Sigmoid colon (tissue), 7 donors: ENCODE measurements at regions of chr6 and their contacts with region 1.

Region 1: GRCh38 chr6:12011276-12012076 is 636 bp upstream of the HIVEP1 start:
- DNase-seq: peak; percentile 99
- H3K4me3 ChIP-seq: peak overlapping the region; percentile 47 to 93 (median 81)
- H3K27ac ChIP-seq: peak overlapping the region; percentile 93 to 99 (median 98)
- H3K4me1 ChIP-seq: peaks cover 0 to 35% (median 31%) of the 10 kb centered on the region in 4 donors
- H3K27me3 ChIP-seq: no peaks in the 10 kb centered on the region
- CTCF ChIP-seq: no peak
- EP300 ChIP-seq: peak in 3 of 4 donors; percentile 14 to 56 (median 52)
- POLR2A ChIP-seq: no peak

Region 2: DNA sequence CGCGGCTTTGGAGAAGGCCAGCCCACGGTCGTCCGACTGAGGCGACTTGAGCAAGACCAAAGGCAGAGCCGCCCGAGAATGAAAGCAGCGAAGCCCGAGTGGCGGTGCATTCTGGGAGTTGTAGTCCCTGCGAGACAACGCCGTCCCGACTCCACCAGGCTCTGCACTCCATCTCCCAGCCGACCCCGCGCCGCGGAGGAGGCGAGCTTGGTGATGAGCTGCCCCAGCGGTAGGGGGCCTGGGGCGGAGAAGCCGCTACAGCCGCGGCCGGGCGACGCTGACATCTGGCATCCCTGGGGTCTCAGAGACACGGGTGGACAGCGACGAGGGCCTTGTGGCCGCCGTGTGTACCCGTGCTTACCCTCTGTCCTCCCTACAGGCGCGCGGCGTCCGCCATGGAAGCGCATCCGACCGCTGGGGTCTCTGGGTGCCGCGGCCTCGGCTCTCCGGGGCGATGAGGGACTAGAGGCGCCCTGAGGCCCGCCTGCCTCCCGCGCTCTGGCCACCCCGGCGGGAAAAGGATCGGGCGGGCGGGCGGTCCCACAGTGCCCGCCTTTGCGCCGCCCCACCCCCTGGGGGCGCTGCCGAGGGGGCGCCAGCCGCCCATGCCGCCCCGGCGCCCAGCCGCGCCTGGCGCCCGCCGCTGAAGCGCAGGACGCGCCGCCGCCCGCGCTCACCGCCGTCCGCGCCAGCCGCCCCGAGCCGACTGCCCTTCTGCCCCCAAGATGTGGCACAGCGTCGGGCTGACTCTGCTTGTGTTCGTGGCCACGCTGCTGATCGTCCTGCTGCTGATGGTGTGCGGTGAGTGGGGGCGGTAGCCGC is 917.7 kb before region 1 on chr6 and contains the start of gene SMIM13:
- intact Hi-C with region 1: loop called (anchors 10 kb)
- DNase-seq: peak; percentile 98
- H3K4me3 ChIP-seq: peak within 1 kb of the TSS; percentile 89 to 98 (median 92)
- H3K27ac ChIP-seq: peak within 1 kb of the TSS; percentile 97 to 98 (median 98)
- H3K4me1 ChIP-seq: peaks cover 0 to 24% (median 18%) of the 10 kb centered on the region in 4 donors
- H3K27me3 ChIP-seq: no peaks in the 10 kb centered on the region
- CTCF ChIP-seq: peak; percentile 33 to 52 (median 42)
- EP300 ChIP-seq: no peak
- POLR2A ChIP-seq: peak; percentile 54 to 57
- total RNA-seq, gene SMIM13: 8.7 to 12.1 (median 8.8) TPM

Region 3: GRCh38 chr6:11537229-11538051 is 474.0 kb before region 1 on chr6 and contains the start of gene TMEM170B:
- intact Hi-C with region 1: loop called (anchors 2 kb)
- DNase-seq: peak; percentile 97
- H3K4me3 ChIP-seq: peak within 1 kb of the TSS; percentile 88 to 99 (median 96)
- H3K27ac ChIP-seq: peak within 1 kb of the TSS; percentile 86 to 93 (median 90)
- H3K4me1 ChIP-seq: peaks cover 0 to 26% (median 12%) of the 10 kb centered on the region in 4 donors
- H3K27me3 ChIP-seq: no peaks in the 10 kb centered on the region
- CTCF ChIP-seq: no peak
- EP300 ChIP-seq: no peak
- POLR2A ChIP-seq: peak; percentile 26 to 41
- total RNA-seq, gene TMEM170B: 8.7 to 11.0 (median 10.4) TPM

Region 4: GRCh38 chr6:11585426-11586016 is 426.0 kb before region 1 on chr6:
- intact Hi-C with region 1: loop called (anchors 10 kb)
- DNase-seq: no peak
- H3K4me3 ChIP-seq: no peak overlapping the region
- H3K27ac ChIP-seq: peak overlapping the region in 1 of 4 donors; percentile 37
- H3K4me1 ChIP-seq: peaks cover 0 to 24% (median 17%) of the 10 kb centered on the region in 4 donors
- H3K27me3 ChIP-seq: no peaks in the 10 kb centered on the region
- CTCF ChIP-seq: peak in 3 of 4 experiments; percentile 42 to 47 (median 45)
- EP300 ChIP-seq: no peak
- POLR2A ChIP-seq: no peak